ENCODE measurements at regions of chr11 and their contacts with region 1.

Region 1: GRCh38 chr11:120235024-120235861 is 4.7 kb upstream of the POU2F3 start:
- DNase-seq: peak in 1 of 3 donors; percentile 69
- ATAC-seq: peak; percentile 78 to 81 (median 80)
- H3K4me3 ChIP-seq: no peak overlapping the region
- H3K27ac ChIP-seq: no peak overlapping the region
- H3K4me1 ChIP-seq: peaks cover 0 to 3% (median 0%) of the 10 kb centered on the region in 4 donors
- H3K27me3 ChIP-seq: no peaks in the 10 kb centered on the region
- CTCF ChIP-seq: peak; percentile 70 to 84 (median 78)
- POLR2A ChIP-seq: no peak

Region 2: DNA sequence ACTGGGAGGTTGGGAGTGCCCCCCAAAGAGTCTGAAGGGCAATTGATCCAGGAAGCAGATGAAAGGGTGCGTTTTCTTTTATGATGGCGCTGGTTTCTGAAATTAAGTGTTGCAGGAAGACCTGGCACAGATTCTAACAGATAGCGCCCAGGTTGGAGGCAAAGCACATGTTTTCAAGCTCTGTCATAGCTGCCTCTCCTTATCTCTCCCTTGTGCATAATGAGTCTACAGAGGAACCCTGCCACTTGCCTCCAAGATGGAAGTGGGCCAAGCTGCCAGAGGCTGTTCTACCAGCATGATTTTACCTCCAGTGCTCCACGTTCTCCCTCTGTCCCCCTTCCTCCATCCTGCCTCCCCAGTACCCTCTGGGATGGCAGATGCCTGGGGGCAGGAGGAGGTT is 59.8 kb after region 1 on chr11:
- intact Hi-C with region 1: loop called (anchors 5 kb)
- DNase-seq: peak in 1 of 3 donors; percentile 23
- ATAC-seq: peak in 1 of 4 donors; percentile 43
- H3K4me3 ChIP-seq: no peak overlapping the region
- H3K27ac ChIP-seq: no peak overlapping the region
- H3K4me1 ChIP-seq: peaks cover 0 to 13% (median 0%) of the 10 kb centered on the region in 4 donors
- H3K27me3 ChIP-seq: no peaks in the 10 kb centered on the region
- CTCF ChIP-seq: no peak
- POLR2A ChIP-seq: no peak